Right ventricle myocardium inferior (tissue), 1 donor: ENCODE measurements at regions of chr3 and their contacts with region 1.

Region 1: DNA sequence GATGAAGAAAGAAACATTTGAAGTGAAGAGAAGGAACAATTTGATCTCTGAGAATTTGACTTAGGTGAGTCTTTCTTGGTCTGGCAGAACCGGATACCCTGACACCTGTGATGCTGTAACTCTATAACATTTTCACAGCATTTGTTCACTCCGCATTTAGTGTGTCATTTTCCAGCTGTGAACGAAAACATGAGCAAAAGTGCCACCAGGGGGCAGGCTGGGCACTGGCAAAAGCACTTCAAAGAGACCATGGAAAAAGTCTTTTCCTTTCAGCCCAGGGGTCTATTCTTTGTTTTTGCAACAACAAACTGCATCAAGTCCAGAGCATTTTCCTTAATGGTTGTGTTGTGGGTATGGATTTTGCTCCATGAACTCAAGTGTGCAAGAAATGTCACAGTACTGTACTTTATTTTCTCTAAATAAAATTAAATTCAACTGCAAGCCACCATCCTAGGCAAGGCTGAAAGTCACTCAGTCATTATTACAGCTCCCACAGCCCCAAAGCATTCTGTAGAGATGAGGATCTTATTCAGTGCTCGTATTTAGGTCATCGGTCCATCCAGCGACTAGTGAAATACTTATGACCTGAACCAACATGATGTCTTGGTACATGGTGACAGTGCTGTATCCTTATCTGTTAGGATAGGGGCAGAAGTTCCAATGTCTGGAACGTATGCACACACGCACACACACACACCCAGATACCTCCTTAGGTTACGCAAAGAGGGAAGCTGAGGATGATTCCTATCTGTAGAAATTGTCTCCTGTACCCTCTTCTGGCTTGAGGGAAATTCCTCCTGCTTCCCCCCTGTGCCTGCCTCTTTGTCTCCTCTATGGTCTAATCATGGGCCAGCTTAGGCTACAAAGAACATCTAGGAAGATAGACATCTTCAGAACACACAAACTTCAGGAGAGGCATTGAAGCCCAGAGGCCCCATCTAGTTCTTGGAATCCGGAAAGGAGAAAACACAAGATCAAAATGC is 125.5 kb downstream of the GADL1 start:
- DNase-seq: peak; percentile 75
- ATAC-seq: no peak

Region 2: GRCh38 chr3:30347679-30348216 is 421.2 kb before region 1 on chr3:
- intact Hi-C with region 1: no loop called
- DNase-seq: no peak
- ATAC-seq: no peak

Region 3: GRCh38 chr3:30729512-30729911 is 39.5 kb before region 1 on chr3:
- intact Hi-C with region 1: no loop called
- DNase-seq: no peak
- ATAC-seq: no peak

Region 4: GRCh38 chr3:31010491-31010890 is 241.5 kb after region 1 on chr3:
- intact Hi-C with region 1: loop called (anchors 1 kb)
- DNase-seq: no peak
- ATAC-seq: no peak

Region 5: DNA sequence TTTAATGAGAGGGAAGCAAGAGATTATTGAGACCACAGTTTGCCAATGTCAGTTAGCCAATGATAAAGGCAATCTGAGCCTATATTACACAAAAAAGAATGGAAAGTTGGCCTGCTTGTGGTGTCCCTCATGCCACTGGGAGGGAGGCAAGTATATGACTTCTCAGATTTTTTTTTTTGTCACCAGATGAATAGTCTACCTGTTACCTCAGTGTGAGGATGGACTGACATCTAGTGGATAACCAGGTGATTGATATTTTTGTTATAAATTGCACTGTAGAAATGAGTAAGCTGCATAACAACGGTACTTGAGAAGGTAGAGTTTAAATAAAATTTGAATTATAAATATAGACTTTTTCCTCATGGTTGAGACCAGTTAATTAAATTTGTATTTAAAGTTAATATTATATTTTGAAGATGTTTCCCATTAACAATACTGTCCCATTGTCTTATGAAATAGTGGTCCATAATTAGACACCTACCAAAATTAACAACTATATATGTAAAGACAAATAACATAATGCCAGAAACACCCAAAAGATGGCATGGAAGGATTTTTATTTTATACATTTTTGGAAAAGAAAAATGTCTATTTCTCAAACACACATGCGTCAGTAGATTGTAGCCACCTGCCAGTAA is 363.3 kb after region 1 on chr3:
- intact Hi-C with region 1: loop called (anchors 2 kb)
- DNase-seq: no peak
- ATAC-seq: no peak